ENCODE measurements at regions of chr16 and their contacts with region 1.

Region 1: DNA sequence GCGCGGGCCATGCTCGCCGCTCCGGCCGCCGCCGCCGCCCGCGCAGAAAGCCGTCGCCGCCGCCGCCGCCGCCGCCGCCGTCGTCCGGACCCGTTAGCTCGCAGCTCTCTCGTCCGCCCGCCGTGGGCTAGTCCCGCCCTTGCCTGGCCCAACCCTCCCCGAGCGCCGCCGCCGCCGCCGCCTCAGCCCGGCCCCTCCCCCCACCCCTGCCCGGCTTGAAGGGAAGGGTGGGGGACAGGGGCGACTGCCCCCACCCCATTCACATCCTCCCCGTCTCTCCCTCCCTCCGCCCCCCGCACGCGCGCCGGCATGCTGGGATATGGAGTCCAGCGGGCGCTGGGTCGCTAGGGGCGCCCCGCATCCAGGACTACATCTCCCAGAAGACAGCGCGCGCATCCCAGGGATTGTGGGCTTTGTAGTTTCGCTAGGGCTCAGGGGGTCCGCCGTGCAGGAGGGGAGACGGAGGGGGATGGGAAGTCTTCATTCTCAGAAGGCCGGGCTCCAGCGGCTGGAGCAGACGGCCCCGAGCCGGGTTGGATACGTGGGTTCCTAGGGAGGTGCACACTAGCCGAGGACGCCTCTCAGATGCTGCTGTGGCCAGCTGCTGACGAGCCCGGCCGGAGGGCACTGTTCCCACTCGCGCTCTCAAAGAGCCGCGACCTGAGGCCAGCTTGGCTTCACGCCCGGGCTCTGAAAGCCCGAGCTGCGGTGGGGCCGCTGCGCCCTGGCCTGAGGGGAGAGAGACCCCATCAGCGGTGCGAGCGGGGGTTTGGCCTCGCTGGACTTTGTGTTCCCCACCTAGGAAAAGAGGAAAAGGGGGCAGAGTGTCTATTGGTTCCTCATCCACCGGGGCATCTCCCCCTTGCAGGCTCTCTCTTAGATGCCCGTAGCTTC is at the start of gene ST3GAL2:
- DNase-seq: peak; percentile 87 to 96 (median 94)
- ATAC-seq: peak; percentile 97
- H3K4me3 ChIP-seq: peak within 1 kb of the TSS; percentile 94
- H3K4me3 Mint-ChIP-seq: peak within 1 kb of the TSS; percentile 92
- H3K27ac ChIP-seq: peak within 1 kb of the TSS in 1 of 2 donors; percentile 33
- H3K27ac Mint-ChIP-seq: peak within 1 kb of the TSS; percentile 82
- H3K4me1 ChIP-seq: peaks cover 33% of the 10 kb centered on the region
- H3K4me1 Mint-ChIP-seq: peaks cover 45% of the 10 kb centered on the region
- H3K27me3 ChIP-seq: no peaks in the 10 kb centered on the region
- H3K27me3 Mint-ChIP-seq: no peaks in the 10 kb centered on the region
- CTCF ChIP-seq: no peak
- total RNA-seq, gene ST3GAL2: 9.8 to 11.1 TPM

Region 2: GRCh38 chr16:70402916-70403659 is 36.1 kb before region 1 on chr16:
- CTCF ChIA-PET with region 1: no interaction called
- POLR2A ChIA-PET with region 1: interaction called, 9 read pairs
- intact Hi-C with region 1: loop called (anchors 5 kb)
- DNase-seq: no peak
- ATAC-seq: no peak
- H3K4me3 ChIP-seq: no peak overlapping the region
- H3K4me3 Mint-ChIP-seq: peak overlapping the region; percentile 55
- H3K27ac ChIP-seq: no peak overlapping the region
- H3K27ac Mint-ChIP-seq: peak overlapping the region; percentile 75
- H3K4me1 ChIP-seq: peaks cover 50% of the 10 kb centered on the region
- H3K4me1 Mint-ChIP-seq: peaks cover 57% of the 10 kb centered on the region
- H3K27me3 ChIP-seq: no peaks in the 10 kb centered on the region
- H3K27me3 Mint-ChIP-seq: no peaks in the 10 kb centered on the region
- CTCF ChIP-seq: no peak

Region 3: DNA sequence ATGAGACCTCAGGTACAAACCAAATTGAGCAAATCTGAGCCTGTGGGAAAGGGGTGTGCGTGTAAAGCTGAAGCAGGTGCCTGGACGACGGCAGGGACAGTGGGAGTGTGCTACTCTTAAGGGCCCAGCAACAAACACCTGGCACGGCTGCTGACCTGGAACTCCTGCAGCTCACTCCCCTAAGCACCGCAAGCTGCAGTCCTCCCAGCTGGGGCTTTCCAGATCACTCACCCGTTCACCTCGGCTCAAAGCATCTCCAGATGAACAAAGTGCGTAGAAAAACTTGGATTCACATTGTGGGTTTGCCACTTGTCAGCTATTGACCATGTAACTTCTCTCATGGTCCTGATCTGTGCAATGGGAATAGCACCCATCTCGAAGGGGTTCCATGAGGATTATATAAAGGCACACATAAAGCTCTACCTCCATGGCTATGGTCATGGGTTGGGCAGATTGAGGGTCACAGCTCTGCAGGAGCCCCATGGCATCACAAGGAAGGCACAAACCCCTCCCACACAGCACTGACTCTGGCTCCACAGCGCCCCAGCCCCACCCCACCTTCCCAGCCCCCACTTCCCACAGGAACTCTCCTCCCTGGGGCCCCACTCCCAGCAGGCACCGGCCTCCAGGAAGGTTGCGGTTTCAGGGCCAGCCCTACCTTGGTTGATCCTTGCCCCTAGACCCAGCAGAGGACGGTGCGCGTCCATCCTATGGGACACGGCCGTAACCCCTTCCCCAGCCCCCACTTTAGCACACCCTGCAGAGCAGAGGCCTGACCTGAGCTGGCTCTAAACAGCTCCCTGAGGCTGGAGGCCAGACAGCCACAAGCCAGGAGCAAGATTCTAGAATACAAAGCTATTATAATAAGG is 22.2 kb before region 1 on chr16:
- CTCF ChIA-PET with region 1: interaction called, 3 read pairs
- POLR2A ChIA-PET with region 1: interaction called, 15 read pairs
- intact Hi-C with region 1: no loop called
- DNase-seq: peak in 1 of 14 experiments; percentile 9
- ATAC-seq: no peak
- H3K4me3 ChIP-seq: no peak overlapping the region
- H3K4me3 Mint-ChIP-seq: no peak overlapping the region
- H3K27ac ChIP-seq: no peak overlapping the region
- H3K27ac Mint-ChIP-seq: peak overlapping the region; percentile 71
- H3K4me1 ChIP-seq: peaks cover 44% of the 10 kb centered on the region
- H3K4me1 Mint-ChIP-seq: peaks cover 53% of the 10 kb centered on the region
- H3K27me3 ChIP-seq: no peaks in the 10 kb centered on the region
- H3K27me3 Mint-ChIP-seq: no peaks in the 10 kb centered on the region
- CTCF ChIP-seq: no peak

Region 4: GRCh38 chr16:70454222-70455034 is 15.2 kb after region 1 on chr16 and contains the start of gene FCSK:
- CTCF ChIA-PET with region 1: interaction called, 6 read pairs
- POLR2A ChIA-PET with region 1: interaction called, 18 read pairs
- intact Hi-C with region 1: loop called (anchors 1 to 2 kb)
- DNase-seq: peak; percentile 50 to 85 (median 59)
- ATAC-seq: peak; percentile 91
- H3K4me3 ChIP-seq: peak within 1 kb of the TSS; percentile 93
- H3K4me3 Mint-ChIP-seq: peak within 1 kb of the TSS; percentile 90
- H3K27ac ChIP-seq: peak within 1 kb of the TSS; percentile 89 to 95
- H3K27ac Mint-ChIP-seq: peak within 1 kb of the TSS; percentile 61
- H3K4me1 ChIP-seq: peaks cover 21% of the 10 kb centered on the region
- H3K4me1 Mint-ChIP-seq: peaks cover 23% of the 10 kb centered on the region
- H3K27me3 ChIP-seq: no peaks in the 10 kb centered on the region
- H3K27me3 Mint-ChIP-seq: no peaks in the 10 kb centered on the region
- CTCF ChIP-seq: no peak
- total RNA-seq, gene FCSK: 21.8 to 25.4 TPM

Region 5: DNA sequence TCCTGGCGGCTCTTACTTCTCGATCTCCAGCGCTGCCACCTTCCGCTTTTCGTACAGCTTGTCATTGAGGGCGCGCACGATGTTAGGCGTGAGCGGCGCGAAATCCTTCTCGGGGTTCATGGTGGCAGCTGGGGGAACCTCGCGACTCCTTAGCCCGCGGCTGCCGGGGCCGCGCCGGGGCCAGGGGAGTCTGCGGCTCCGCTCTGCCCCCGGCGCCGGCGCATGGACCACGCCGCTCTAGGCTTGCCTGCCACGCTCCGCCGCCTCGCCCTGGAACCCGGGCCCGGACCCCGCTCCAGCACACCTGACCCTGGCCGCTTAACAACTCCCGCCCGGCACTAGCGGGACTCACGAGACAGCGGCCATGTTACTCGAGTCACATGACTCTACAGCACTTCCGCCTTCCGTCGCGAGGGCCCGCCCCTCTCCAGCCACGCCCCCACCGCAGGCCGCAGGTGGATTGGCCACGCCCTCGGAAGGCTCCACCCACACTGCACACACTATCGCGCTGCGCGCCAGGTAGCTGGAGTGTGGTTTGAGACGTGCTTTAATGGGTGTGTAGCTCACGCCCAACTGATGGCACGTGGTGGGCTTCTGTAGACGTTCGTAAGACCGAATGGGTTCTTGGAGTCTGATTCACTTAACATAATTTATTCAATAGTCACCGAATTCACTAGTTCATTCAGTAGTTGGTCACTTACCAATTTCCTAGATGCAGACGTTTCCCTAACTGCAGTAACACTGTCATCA is 361.7 kb after region 1 on chr16 and contains the start of gene VAC14:
- CTCF ChIA-PET with region 1: no interaction called
- POLR2A ChIA-PET with region 1: no interaction called
- intact Hi-C with region 1: loop called in 1 of 2 experiments (anchors 5 kb)
- DNase-seq: peak; percentile 95 to 99 (median 98)
- ATAC-seq: peak; percentile 98
- H3K4me3 ChIP-seq: peak within 1 kb of the TSS; percentile 85
- H3K4me3 Mint-ChIP-seq: peak within 1 kb of the TSS; percentile 95
- H3K27ac ChIP-seq: peak within 1 kb of the TSS; percentile 53 to 61
- H3K27ac Mint-ChIP-seq: peak within 1 kb of the TSS; percentile 90
- H3K4me1 ChIP-seq: peaks cover 17% of the 10 kb centered on the region
- H3K4me1 Mint-ChIP-seq: peaks cover 35% of the 10 kb centered on the region
- H3K27me3 ChIP-seq: no peaks in the 10 kb centered on the region
- H3K27me3 Mint-ChIP-seq: no peaks in the 10 kb centered on the region
- CTCF ChIP-seq: no peak
- total RNA-seq, gene VAC14: 23.0 to 23.6 TPM

Measured in CD4-positive, alpha-beta T cell (primary cell).